ENCODE measurements at regions of chr2 and their contacts with region 1.

Region 1: DNA sequence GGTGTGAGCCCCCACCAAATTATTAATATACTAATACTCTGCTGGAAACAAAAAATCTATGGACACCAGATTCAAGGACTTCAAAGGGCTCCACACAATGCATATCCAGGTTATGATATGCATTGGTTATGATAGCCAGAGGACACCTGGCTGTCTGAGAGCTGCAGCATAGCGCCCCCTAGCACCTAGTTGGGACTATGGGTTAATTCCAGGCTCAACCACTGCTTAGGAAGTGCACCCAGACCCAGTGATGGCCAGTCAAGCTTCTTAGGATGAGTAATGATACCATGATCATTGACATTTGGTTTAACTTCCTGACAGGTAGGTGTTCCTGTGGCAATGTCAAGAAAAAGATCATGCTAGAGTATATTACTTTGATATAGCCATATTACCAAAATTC is 3.8 kb upstream of the FRZB start:
- DNase-seq: peak; percentile 50 to 62
- H3K4me3 ChIP-seq: no peak overlapping the region
- H3K4me3 Mint-ChIP-seq: no peak overlapping the region
- H3K27ac Mint-ChIP-seq: no peak overlapping the region
- H3K4me1 ChIP-seq: no peaks in the 10 kb centered on the region
- H3K4me1 Mint-ChIP-seq: peaks cover 6% of the 10 kb centered on the region
- H3K27me3 ChIP-seq: no peaks in the 10 kb centered on the region
- H3K27me3 Mint-ChIP-seq: no peaks in the 10 kb centered on the region
- CTCF ChIP-seq: peak; percentile 43 to 48

Region 2: DNA sequence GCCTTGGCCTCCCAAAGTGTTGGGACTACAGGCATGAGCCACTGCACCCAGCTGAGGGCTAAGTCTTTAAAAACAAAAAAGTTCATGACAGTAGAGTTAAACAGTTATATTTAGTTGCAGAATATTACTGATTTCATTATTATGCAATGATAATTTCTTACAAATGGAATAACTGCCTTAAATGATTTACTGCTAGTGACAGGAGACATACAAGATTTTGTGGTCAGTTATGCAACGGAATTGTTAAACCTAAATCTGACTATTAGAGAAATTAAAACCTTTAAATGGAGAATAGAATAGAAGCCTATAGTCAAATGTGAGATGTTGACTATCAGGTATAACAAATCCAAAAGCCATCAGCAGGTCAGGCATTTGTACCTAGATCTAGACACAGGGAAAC is 164.5 kb before region 1 on chr2:
- CTCF ChIA-PET with region 1: no interaction called
- POLR2A ChIA-PET with region 1: no interaction called
- intact Hi-C with region 1: no loop called
- DNase-seq: no peak
- H3K4me3 ChIP-seq: no peak overlapping the region
- H3K4me3 Mint-ChIP-seq: no peak overlapping the region
- H3K27ac Mint-ChIP-seq: no peak overlapping the region
- H3K4me1 ChIP-seq: no peaks in the 10 kb centered on the region
- H3K4me1 Mint-ChIP-seq: no peaks in the 10 kb centered on the region
- H3K27me3 ChIP-seq: no peaks in the 10 kb centered on the region
- H3K27me3 Mint-ChIP-seq: peaks cover 13% of the 10 kb centered on the region
- CTCF ChIP-seq: no peak

Region 3: DNA sequence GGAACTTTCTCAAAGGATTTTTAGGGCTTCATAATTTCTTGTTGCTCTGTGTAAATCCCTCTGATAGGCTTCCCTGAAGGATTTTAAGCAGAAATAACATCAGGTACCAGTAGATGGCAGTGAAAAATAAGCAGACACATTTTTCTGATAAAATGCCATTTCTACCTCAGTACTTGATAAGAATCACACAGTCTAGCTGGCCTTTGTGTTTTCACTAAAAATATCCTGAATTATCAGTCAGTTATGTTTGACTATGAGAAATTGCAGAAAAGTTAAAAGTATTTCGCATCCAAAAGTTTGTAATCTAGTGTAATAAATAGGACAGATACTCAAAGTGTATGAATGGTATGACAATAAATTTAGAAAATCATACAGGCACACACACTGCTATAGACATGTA is 85.5 kb before region 1 on chr2:
- CTCF ChIA-PET with region 1: no interaction called
- POLR2A ChIA-PET with region 1: no interaction called
- intact Hi-C with region 1: loop called (anchors 1 kb)
- DNase-seq: peak in 1 of 2 experiments; percentile 48
- H3K4me3 ChIP-seq: no peak overlapping the region
- H3K4me3 Mint-ChIP-seq: no peak overlapping the region
- H3K27ac Mint-ChIP-seq: no peak overlapping the region
- H3K4me1 ChIP-seq: no peaks in the 10 kb centered on the region
- H3K4me1 Mint-ChIP-seq: no peaks in the 10 kb centered on the region
- H3K27me3 ChIP-seq: no peaks in the 10 kb centered on the region
- H3K27me3 Mint-ChIP-seq: no peaks in the 10 kb centered on the region
- CTCF ChIP-seq: peak; percentile 70 to 73

Region 4: GRCh38 chr2:182804128-182804527 is 66.1 kb before region 1 on chr2:
- CTCF ChIA-PET with region 1: no interaction called
- POLR2A ChIA-PET with region 1: no interaction called
- intact Hi-C with region 1: loop called (anchors 5 kb)
- DNase-seq: no peak
- H3K4me3 ChIP-seq: no peak overlapping the region
- H3K4me3 Mint-ChIP-seq: no peak overlapping the region
- H3K27ac Mint-ChIP-seq: no peak overlapping the region
- H3K4me1 ChIP-seq: no peaks in the 10 kb centered on the region
- H3K4me1 Mint-ChIP-seq: no peaks in the 10 kb centered on the region
- H3K27me3 ChIP-seq: no peaks in the 10 kb centered on the region
- H3K27me3 Mint-ChIP-seq: no peaks in the 10 kb centered on the region
- CTCF ChIP-seq: no peak

Region 5: DNA sequence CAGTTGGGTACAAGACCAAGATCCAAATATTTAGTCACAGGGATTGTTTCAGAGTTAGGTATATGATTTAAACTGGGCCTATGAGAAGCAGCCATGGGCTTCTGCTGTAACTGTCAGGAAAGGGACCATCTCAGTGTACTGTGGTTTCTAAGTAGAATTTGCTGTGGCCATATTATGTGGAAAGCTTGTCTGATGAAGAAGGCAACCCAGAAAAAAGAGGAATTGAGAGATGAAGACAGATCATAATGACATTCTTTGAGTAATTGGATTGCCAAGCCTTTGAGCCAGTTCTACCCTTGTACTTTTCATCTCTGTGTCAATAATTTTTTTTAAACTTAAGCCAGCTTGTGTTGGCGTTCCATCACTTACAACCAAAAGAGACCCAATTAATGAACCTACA is 513.6 kb after region 1 on chr2:
- CTCF ChIA-PET with region 1: no interaction called
- POLR2A ChIA-PET with region 1: no interaction called
- intact Hi-C with region 1: no loop called
- DNase-seq: no peak
- H3K4me3 ChIP-seq: no peak overlapping the region
- H3K4me3 Mint-ChIP-seq: no peak overlapping the region
- H3K27ac Mint-ChIP-seq: no peak overlapping the region
- H3K4me1 ChIP-seq: no peaks in the 10 kb centered on the region
- H3K4me1 Mint-ChIP-seq: no peaks in the 10 kb centered on the region
- H3K27me3 ChIP-seq: no peaks in the 10 kb centered on the region
- H3K27me3 Mint-ChIP-seq: no peaks in the 10 kb centered on the region
- CTCF ChIP-seq: no peak